CD4-positive, alpha-beta T cell (primary cell): ENCODE measurements at regions of chrX and their contacts with region 1.

Region 1: DNA sequence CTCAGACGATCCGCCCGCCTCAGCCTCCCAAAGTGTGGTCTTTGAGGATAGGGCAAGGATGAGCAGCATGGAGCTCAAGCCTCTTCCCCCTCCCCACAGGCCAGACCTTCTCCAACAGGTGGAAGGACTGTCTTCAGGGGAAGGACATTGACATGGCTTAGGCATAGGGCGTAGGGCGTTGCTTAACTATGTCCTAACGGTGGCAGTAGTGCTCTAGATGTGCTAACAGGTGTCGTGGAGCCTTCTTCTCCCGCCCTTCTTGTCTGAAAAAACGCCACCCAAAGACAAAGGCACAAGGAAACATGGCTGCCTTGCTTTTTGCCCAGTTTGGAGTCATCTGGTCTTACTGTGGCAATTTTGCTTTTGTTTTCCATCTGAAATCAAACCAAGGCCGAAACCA is 219.8 kb downstream of the OR13H1 start:
- DNase-seq: peak in 4 of 14 experiments; percentile 68 to 85 (median 74)
- ATAC-seq: no peak
- H3K4me3 ChIP-seq: no peak overlapping the region
- H3K4me3 Mint-ChIP-seq: no peak overlapping the region
- H3K27ac ChIP-seq: no peak overlapping the region
- H3K27ac Mint-ChIP-seq: no peak overlapping the region
- H3K4me1 ChIP-seq: no peaks in the 10 kb centered on the region
- H3K4me1 Mint-ChIP-seq: no peaks in the 10 kb centered on the region
- H3K27me3 ChIP-seq: no peaks in the 10 kb centered on the region
- H3K27me3 Mint-ChIP-seq: no peaks in the 10 kb centered on the region
- CTCF ChIP-seq: no peak

Region 2: DNA sequence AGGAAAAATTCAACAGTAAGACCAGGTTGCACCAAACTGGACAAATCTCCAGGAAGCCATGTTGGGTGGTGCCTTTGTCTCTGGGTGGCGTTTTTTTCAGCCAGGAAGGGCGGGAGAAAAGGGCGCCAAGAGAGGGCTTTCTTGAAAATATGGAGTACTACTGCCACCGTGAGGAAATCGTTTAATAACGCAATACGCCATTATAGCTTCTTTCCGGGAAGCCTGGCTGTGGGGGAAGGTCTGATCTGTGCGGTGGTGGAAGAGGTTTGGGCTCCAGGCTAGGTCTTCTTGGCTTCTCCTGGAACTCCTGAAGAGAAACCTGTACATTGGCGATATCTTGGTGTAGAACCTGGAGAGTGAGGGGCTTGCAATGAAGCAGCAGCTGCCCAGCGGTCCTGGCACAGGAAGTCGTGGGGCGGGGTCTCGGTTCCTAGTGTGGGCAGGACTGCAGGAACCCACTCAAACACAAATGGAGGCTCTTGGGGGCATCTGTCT is 17.2 kb before region 1 on chrX:
- CTCF ChIA-PET with region 1: interaction called, 11 read pairs
- POLR2A ChIA-PET with region 1: no interaction called
- intact Hi-C with region 1: no loop called
- DNase-seq: peak in 4 of 14 experiments; percentile 72 to 77 (median 74)
- ATAC-seq: no peak
- H3K4me3 ChIP-seq: no peak overlapping the region
- H3K4me3 Mint-ChIP-seq: no peak overlapping the region
- H3K27ac ChIP-seq: peak overlapping the region in 1 of 2 donors; percentile 35
- H3K27ac Mint-ChIP-seq: no peak overlapping the region
- H3K4me1 ChIP-seq: no peaks in the 10 kb centered on the region
- H3K4me1 Mint-ChIP-seq: no peaks in the 10 kb centered on the region
- H3K27me3 ChIP-seq: no peaks in the 10 kb centered on the region
- H3K27me3 Mint-ChIP-seq: no peaks in the 10 kb centered on the region
- CTCF ChIP-seq: no peak

Region 3: GRCh38 chrX:131752489-131753198 is 11.0 kb before region 1 on chrX:
- CTCF ChIA-PET with region 1: interaction called, 14 read pairs
- POLR2A ChIA-PET with region 1: no interaction called
- intact Hi-C with region 1: no loop called
- DNase-seq: peak in 4 of 14 experiments; percentile 64 to 87 (median 69)
- ATAC-seq: no peak
- H3K4me3 ChIP-seq: no peak overlapping the region
- H3K4me3 Mint-ChIP-seq: no peak overlapping the region
- H3K27ac ChIP-seq: no peak overlapping the region
- H3K27ac Mint-ChIP-seq: no peak overlapping the region
- H3K4me1 ChIP-seq: no peaks in the 10 kb centered on the region
- H3K4me1 Mint-ChIP-seq: no peaks in the 10 kb centered on the region
- H3K27me3 ChIP-seq: no peaks in the 10 kb centered on the region
- H3K27me3 Mint-ChIP-seq: no peaks in the 10 kb centered on the region
- CTCF ChIP-seq: no peak

Region 4: GRCh38 chrX:131895807-131896206 is 132.1 kb after region 1 on chrX:
- CTCF ChIA-PET with region 1: no interaction called
- POLR2A ChIA-PET with region 1: no interaction called
- intact Hi-C with region 1: no loop called
- DNase-seq: peak in 3 of 14 experiments; percentile 2 to 11 (median 6)
- ATAC-seq: no peak
- H3K4me3 ChIP-seq: no peak overlapping the region
- H3K4me3 Mint-ChIP-seq: no peak overlapping the region
- H3K27ac ChIP-seq: no peak overlapping the region
- H3K27ac Mint-ChIP-seq: no peak overlapping the region
- H3K4me1 ChIP-seq: no peaks in the 10 kb centered on the region
- H3K4me1 Mint-ChIP-seq: no peaks in the 10 kb centered on the region
- H3K27me3 ChIP-seq: no peaks in the 10 kb centered on the region
- H3K27me3 Mint-ChIP-seq: no peaks in the 10 kb centered on the region
- CTCF ChIP-seq: peak; percentile 13